ENCODE measurements at regions of chr3 and their contacts with region 1.

Region 1: DNA sequence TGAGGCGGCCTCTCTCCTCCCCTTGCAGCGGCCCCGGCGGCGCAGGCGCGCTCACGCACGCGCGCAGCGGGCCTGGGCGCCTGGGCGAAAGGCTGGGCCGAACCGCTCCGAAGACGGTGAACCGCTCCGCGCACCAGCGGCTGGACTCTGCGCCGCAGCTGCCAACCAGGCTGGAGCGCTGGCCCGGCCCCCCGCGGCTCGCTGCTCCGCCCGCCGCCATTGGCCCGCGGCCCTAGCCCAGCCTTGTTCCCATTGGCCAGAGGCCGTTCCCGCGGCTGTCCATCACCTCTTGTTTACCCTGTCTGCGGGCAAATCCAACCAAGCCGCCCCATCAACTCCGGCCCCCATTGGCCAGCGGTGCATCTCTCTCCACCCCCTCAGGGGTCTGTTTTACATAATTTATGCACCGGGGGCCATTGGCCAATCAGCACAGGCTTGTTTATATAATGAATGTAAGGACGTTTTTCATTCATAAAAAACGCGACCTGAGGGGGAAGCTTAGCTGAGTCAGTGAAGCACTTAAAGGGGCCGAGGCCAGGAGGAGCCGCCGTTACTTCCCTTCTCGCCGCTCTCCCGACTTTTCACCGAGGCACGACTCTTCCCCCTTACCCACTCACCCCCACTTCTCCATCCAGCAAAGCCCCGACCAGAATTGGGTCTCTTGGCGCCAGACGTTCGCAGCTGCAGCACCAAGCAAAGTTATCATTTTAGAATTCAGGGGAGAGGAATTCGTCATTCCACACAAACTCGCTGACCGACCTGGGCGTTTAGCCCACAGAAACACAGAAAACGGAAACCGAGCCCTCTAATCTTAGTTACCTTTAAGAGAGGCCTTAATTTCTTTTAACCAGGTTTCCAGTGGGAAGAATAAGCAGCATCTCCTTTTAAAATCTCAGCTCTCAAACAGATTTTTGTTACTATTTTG is at the start of gene ETV5:
- DNase-seq: peak; percentile 97
- H3K4me3 Mint-ChIP-seq: peak within 1 kb of the TSS; percentile 78
- H3K27ac Mint-ChIP-seq: no peak within 1 kb of the TSS
- H3K4me1 Mint-ChIP-seq: peaks cover 30% of the 10 kb centered on the region
- H3K27me3 Mint-ChIP-seq: peaks cover 79% of the 10 kb centered on the region
- total RNA-seq, gene ETV5: 1.1 to 1.5 TPM

Region 2: DNA sequence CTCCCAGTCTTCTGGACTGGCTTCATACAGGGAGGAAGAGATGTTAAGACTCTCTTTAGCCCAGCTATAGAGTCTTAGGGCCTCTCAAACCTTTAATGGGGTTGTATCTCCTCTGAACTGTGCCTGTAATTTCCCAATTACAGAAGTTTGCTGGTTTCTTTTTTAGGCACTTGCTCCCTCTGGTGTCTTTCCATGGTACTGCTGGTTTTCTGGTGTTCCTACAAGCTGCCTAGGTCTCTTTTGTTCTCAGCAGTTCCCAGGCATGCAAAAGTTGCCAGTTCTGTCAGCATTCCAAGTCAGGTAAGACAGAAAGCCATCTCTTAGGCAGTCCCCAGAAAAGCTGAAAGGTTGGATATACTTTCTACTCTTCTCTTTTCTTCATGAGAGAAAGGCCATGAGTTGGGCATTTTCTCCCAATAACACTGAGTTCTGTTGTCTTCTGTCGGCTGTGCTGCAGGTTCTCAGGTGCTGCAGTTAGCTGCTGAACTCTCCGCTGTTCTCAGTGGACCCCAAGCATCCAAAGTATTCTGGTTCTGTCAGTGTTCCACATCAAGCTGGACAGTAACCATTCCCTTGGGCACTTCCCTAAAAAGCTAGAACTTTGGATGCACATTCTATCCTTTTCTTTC is 801.0 kb before region 1 on chr3:
- CTCF ChIA-PET with region 1: no interaction called
- intact Hi-C with region 1: no loop called
- DNase-seq: peak; percentile 74
- H3K4me3 Mint-ChIP-seq: no peak overlapping the region
- H3K27ac Mint-ChIP-seq: no peak overlapping the region
- H3K4me1 Mint-ChIP-seq: no peaks in the 10 kb centered on the region
- H3K27me3 Mint-ChIP-seq: no peaks in the 10 kb centered on the region

Region 3: GRCh38 chr3:185937689-185938463 is 171.3 kb before region 1 on chr3 and contains the start of gene TRA2B:
- CTCF ChIA-PET with region 1: no interaction called
- intact Hi-C with region 1: loop called (anchors 1 kb)
- DNase-seq: peak; percentile 99
- H3K4me3 Mint-ChIP-seq: peak within 1 kb of the TSS; percentile 100
- H3K27ac Mint-ChIP-seq: peak within 1 kb of the TSS; percentile 100
- H3K4me1 Mint-ChIP-seq: peaks cover 20% of the 10 kb centered on the region
- H3K27me3 Mint-ChIP-seq: no peaks in the 10 kb centered on the region
- total RNA-seq, gene TRA2B: 172 to 176 TPM

Region 4: GRCh38 chr3:186067360-186068242 is 41.6 kb before region 1 on chr3:
- CTCF ChIA-PET with region 1: no interaction called
- intact Hi-C with region 1: loop called (anchors 2 kb)
- DNase-seq: no peak
- H3K4me3 Mint-ChIP-seq: peak overlapping the region; percentile 62
- H3K27ac Mint-ChIP-seq: peak overlapping the region; percentile 57
- H3K4me1 Mint-ChIP-seq: peaks cover 15% of the 10 kb centered on the region
- H3K27me3 Mint-ChIP-seq: peaks cover 7% of the 10 kb centered on the region

Region 5: DNA sequence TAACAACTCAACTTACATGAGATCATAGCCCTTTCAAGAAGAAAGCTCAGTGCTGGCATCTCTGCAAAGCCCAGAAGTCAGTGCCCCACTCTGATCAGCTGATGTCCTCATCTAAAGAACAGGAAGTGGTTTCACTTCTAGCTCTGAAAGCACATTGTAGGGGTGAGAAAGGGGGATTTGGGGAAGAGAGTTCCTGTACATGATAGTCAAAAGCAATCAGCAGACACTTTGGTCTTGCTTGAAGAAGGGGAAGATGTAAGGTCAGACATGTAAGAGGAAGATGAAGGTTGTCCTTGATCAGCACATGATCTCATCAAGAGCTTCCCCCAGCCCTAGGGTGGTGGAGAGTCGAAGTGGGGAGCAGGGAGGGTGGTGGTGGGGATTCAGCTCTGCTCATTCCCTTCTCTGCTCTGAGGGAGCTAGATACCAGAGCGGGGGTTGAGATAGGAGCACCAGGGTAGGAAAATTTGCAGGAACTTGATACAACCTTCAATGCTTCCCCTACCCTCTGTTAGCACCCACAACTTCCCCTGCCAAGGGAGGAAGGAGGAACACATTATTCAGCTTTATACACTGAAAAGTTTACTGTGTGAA is 76.1 kb after region 1 on chr3:
- CTCF ChIA-PET with region 1: no interaction called
- intact Hi-C with region 1: loop called (anchors 1 kb)
- DNase-seq: peak; percentile 65
- H3K4me3 Mint-ChIP-seq: no peak overlapping the region
- H3K27ac Mint-ChIP-seq: peak overlapping the region; percentile 52
- H3K4me1 Mint-ChIP-seq: peaks cover 13% of the 10 kb centered on the region
- H3K27me3 Mint-ChIP-seq: peaks cover 2% of the 10 kb centered on the region

Region 6: GRCh38 chr3:186413615-186414415 is 304.6 kb after region 1 on chr3:
- CTCF ChIA-PET with region 1: interaction called, 3 read pairs
- intact Hi-C with region 1: loop called (anchors 2 kb)
- DNase-seq: peak; percentile 54
- H3K4me3 Mint-ChIP-seq: peak overlapping the region; percentile 56
- H3K27ac Mint-ChIP-seq: no peak overlapping the region
- H3K4me1 Mint-ChIP-seq: peaks cover 42% of the 10 kb centered on the region
- H3K27me3 Mint-ChIP-seq: peaks cover 18% of the 10 kb centered on the region

Region 7: DNA sequence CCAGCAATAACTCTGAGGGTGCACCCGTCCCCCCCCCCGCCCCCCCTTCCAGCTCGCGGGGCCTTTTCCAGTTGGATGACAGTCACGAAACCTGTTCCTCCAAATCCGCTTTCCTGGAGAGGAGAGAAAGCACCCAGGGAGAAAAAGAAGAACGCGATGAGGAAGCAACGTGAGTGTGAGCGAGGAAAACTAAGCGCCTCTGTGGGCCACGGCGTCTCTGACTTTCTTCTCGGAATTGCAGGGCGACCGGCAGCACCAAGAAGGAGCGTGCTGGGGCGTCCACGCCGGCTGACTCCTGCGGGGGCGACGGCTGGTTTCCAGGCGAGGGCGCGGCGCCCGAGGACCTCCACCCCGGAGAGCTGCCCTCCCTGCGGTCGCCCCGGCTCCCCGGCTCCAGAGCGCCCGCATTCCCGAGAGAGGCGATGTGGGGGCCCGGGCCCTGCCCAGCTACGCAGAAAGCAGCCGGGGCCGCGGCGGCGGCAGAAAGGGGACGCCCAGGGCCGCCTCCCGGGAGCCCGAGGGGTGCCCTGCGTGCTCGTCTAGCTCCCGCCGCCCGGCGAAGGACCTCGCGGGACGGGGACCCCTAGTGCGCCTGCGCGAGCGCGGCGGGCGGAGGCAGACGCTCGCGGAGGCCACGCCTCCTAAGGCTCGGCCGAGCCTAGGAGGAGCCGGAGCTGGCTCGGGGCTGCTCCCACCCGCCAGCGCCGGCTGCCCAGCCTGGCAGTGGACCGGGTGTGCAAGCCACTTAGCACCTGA is 718.0 kb after region 1 on chr3:
- CTCF ChIA-PET with region 1: no interaction called
- intact Hi-C with region 1: loop called (anchors 10 kb)
- DNase-seq: peak; percentile 82
- H3K4me3 Mint-ChIP-seq: peak overlapping the region; percentile 78
- H3K27ac Mint-ChIP-seq: peak overlapping the region; percentile 69
- H3K4me1 Mint-ChIP-seq: peaks cover 30% of the 10 kb centered on the region
- H3K27me3 Mint-ChIP-seq: peaks cover 38% of the 10 kb centered on the region

Measured in activated naive CD4-positive, alpha-beta T cell treated with anti-CD3 and anti-CD28 coated beads for 36 hours (primary cell).